Caco-2 (cell line): ENCODE measurements at regions of chr2 and their contacts with region 1.

Region 1: DNA sequence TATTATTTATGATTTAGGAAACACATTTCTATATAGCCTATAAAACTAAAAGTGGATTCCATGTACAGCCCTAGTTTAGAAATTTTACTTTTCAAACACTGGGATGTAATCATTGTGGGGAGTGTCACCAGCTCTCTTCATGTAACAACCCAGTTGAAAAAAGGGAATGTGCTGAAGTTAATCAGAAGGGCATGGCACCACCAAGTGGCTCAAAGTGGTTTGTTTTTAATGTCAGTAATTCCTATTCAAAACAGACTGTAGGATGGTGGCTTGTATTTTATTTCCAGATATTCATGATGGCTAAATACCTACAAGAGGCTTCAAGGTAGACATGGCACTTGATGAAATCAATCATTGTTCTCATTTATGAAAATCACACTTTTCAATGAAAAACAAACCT is 58.1 kb upstream of the TMEM182 start:
- DNase-seq: peak in 1 of 2 experiments; percentile 39
- H3K4me3 ChIP-seq: no peak overlapping the region
- H3K4me3 Mint-ChIP-seq: no peak overlapping the region
- H3K27ac Mint-ChIP-seq: no peak overlapping the region
- H3K4me1 ChIP-seq: no peaks in the 10 kb centered on the region; the same call in 1 of the 2 replicates
- H3K4me1 Mint-ChIP-seq: peaks cover 17% of the 10 kb centered on the region
- H3K27me3 ChIP-seq: no peaks in the 10 kb centered on the region
- H3K27me3 Mint-ChIP-seq: no peaks in the 10 kb centered on the region
- CTCF ChIP-seq: peak in 1 of 2 experiments; percentile 60

Region 2: GRCh38 chr2:102473020-102473419 is 230.7 kb before region 1 on chr2 and contains the start of gene SLC9A4:
- CTCF ChIA-PET with region 1: interaction called, 13 read pairs
- POLR2A ChIA-PET with region 1: no interaction called
- intact Hi-C with region 1: loop called (anchors 1 kb)
- DNase-seq: peak; percentile 63 to 72
- H3K4me3 ChIP-seq: no peak within 1 kb of the TSS
- H3K4me3 Mint-ChIP-seq: no peak within 1 kb of the TSS
- H3K27ac Mint-ChIP-seq: no peak within 1 kb of the TSS
- H3K4me1 ChIP-seq: peaks cover 17% of the 10 kb centered on the region
- H3K4me1 Mint-ChIP-seq: no peaks in the 10 kb centered on the region
- H3K27me3 ChIP-seq: no peaks in the 10 kb centered on the region
- H3K27me3 Mint-ChIP-seq: no peaks in the 10 kb centered on the region
- CTCF ChIP-seq: peak; percentile 89 to 91
- total RNA-seq, gene SLC9A4: 1.2 and 1.4 TPM in 2 replicates